ENCODE measurements at regions of chr14 and their contacts with region 1.

Region 1: DNA sequence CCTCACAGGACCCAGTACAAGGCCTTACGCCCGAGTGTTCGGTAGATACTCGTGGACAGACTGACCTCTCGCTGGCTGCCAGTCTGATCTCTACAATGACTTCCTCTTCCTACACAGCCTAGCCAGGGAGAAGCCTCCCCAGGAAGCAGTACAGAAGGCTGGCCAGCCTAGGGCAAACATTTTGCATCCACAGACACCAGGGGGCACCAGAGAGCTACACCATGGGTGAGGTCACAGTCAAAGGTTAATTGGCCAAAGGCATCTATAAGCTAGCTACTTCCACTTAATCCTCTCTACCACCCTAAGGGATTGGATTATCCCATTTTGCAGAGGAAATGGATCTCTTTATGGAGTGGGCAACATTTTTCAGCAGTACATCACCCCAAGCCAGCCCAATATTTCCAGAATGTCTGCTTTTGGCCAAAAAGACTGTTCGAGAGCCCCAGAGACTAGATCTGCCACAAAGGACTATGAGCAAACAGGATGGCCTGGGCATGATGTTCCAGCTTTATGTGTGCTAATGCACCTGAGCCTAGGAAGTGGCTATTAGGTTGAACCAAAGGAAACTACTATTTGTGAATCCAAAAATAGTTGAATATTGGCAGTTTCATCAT is 14.6 kb upstream of the PNMA1 start:
- DNase-seq: no peak
- H3K4me3 ChIP-seq: no peak overlapping the region
- CTCF ChIP-seq: peak; percentile 87

Region 2: DNA sequence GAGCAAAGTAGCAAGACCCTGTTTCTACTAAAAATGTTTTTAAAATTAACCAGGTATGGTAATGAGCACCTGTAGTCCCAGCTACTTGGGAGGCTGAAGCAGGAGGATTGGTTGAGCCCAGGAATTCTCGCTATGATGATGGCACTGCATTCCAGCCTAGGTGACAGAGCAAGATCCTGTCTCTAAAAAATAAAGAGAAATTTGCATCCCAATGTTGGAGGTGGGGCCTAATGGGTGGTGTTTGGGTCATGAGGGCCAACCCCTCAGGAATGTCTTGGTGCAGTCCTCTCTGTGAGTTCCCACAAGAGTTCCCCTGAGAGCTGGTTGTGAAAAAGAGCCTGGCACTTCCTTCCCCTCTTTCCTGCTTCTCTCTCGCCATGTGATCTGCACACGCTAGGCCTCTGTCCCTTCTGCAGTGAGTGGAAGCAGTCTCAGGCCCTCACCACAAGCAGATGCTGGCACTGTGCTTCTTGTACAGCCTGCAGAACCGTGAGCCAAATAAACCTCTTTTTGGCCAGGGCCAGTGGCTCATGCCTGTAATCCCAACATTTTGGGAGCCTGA is 105.2 kb before region 1 on chr14:
- CTCF ChIA-PET with region 1: no interaction called
- POLR2A ChIA-PET with region 1: no interaction called
- DNase-seq: no peak
- H3K4me3 ChIP-seq: no peak overlapping the region
- CTCF ChIP-seq: no peak

Region 3: DNA sequence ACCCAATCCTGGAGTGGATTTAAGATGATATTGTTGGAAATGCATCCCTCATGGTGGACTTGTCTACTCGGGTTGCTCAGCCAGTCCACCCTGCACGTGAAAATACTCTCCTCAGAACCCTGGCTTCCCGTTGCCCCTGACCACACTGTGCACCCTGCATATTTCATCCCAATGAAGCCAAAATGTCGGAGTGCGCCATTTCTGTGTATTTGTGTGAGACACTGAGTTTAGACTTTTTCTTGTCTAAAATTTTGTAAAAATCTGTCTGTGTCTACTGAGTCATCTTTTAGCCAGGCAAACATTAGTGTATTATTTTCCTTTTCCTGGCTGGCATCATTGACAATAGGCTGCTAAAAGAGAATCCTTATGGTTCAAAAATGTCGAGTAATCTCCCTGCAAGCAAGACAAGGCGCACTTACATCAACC is 14.2 kb before region 1 on chr14:
- CTCF ChIA-PET with region 1: interaction called, 35 read pairs
- POLR2A ChIA-PET with region 1: no interaction called
- DNase-seq: no peak
- H3K4me3 ChIP-seq: peak overlapping the region; percentile 80
- CTCF ChIP-seq: no peak

Region 4: DNA sequence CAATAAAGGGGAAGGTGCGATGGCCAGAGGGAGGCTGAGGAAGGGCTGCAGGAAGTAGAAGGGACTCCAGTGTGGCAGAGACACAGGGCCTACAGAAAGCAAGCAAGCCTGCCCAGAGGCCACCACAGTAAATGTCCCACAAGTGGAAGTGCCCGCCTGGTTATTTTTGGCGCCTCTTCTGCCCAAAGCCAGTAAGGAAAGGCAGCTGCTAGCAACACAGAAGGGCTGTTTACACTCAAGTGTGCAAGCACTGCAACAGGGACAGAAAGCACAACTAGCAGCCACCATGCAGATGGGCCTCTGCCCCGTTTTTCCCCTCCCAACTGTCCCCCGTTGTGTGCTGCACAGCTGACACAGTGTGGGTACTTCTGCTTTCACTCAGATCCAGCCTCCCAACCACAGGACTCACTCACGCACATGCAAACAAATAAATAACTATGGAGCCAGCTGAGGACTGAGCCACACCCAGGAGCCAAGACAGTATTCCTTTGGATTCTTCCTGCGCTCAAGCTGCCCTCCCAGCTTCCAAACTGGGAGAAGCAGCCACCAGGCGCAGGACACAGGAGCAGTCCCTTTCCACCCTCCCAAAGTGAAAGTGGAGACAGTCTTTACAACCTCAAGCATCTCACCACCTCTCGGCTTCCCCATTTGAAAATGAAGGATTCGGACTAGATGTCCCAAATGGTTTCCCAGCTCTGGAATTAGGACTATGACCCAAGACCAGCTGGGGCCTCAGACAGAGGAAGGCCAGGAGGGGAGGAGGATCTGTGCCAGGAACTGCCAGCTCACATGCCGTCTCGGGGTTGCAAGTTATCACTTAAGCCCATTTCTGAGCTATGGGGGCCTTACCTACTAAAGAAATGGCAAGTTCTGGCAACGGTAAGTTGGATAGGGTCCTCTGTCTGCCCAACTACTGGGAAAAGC is 25.4 kb after region 1 on chr14:
- CTCF ChIA-PET with region 1: interaction called, 35 read pairs
- POLR2A ChIA-PET with region 1: interaction called, 3 read pairs
- DNase-seq: no peak
- H3K4me3 ChIP-seq: peak overlapping the region; percentile 38
- CTCF ChIP-seq: no peak

Region 5: GRCh38 chr14:73825551-73826188 is 96.8 kb after region 1 on chr14:
- CTCF ChIA-PET with region 1: interaction called, 173 read pairs
- POLR2A ChIA-PET with region 1: interaction called, 3 read pairs
- DNase-seq: no peak
- H3K4me3 ChIP-seq: no peak overlapping the region
- CTCF ChIP-seq: peak; percentile 88

Region 6: GRCh38 chr14:73851644-73852382 is 123.0 kb after region 1 on chr14 and contains the start of gene PTGR2:
- CTCF ChIA-PET with region 1: interaction called, 25 read pairs
- POLR2A ChIA-PET with region 1: no interaction called
- DNase-seq: peak; percentile 73
- H3K4me3 ChIP-seq: peak within 1 kb of the TSS; percentile 67
- CTCF ChIP-seq: no peak

Region 7: GRCh38 chr14:73886449-73887317 is 157.9 kb after region 1 on chr14 and contains the start of gene ZNF410:
- CTCF ChIA-PET with region 1: interaction called, 11 read pairs
- POLR2A ChIA-PET with region 1: no interaction called
- DNase-seq: peak; percentile 87
- H3K4me3 ChIP-seq: peak within 1 kb of the TSS; percentile 76
- CTCF ChIP-seq: no peak

Measured in AG04449 (cell line).